ENCODE measurements at regions of chr6 and their contacts with region 1.

Region 1: DNA sequence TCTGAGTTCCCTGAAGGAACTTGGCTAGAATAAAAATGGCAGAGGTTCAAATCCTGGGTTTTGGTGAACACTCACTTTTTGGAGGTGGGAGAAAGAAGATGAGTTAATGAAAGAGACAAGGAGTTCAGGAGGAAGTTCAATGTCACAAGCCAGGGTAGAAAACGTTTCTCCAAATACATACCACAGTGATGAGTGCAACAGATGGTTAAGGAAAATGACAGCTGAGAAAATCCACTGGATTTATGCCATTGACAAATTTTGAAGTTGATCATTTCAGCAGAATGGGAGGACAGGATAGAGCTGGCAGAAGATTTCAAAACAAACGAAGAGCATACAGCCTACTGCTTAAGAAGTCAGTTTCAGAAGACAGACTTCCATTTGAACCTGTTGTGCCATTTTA is 122.7 kb downstream of the GFRAL start:
- DNase-seq: no peak
- ATAC-seq: no peak

Region 2: GRCh38 chr6:55714831-55715230 is 264.8 kb after region 1 on chr6:
- intact Hi-C with region 1: loop called (anchors 5 kb)
- DNase-seq: no peak
- ATAC-seq: no peak

Measured in sciatic nerve (tissue), 2 donors.